MCF 10A (cell line): ENCODE measurements at regions of chr5 and their contacts with region 1.

Region 1: GRCh38 chr5:75265731-75266130 is 29.1 kb upstream of the ANKRD31 start:
- DNase-seq: peak; percentile 47
- H3K4me3 Mint-ChIP-seq: no peak overlapping the region
- H3K27ac Mint-ChIP-seq: no peak overlapping the region
- H3K4me1 Mint-ChIP-seq: no peaks in the 10 kb centered on the region
- H3K27me3 Mint-ChIP-seq: no peaks in the 10 kb centered on the region
- CTCF ChIP-seq: peak; percentile 63

Region 2: DNA sequence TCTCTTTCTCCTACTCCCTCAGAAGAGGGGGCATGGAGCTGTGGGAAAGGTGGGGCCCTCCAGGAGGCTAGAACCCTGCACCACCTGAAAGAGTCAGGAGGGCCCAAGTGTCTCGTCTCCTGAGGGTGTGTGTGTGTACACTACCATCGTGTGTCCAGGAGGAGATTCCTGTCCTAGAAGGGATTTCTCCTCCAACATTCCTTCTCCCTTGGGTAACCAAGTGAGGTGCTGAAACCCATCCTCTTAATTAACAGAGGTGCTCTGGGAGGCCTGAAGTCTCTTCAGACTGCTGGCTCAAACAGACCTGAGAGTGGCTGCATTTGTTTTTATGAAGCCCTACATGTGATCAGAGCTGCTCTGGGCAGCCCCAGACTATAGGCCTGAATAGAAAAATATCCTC is 338.4 kb before region 1 on chr5:
- CTCF ChIA-PET with region 1: interaction called, 40 read pairs
- POLR2A ChIA-PET with region 1: interaction called, 5 read pairs
- intact Hi-C with region 1: loop called (anchors 1 kb)
- DNase-seq: no peak
- H3K4me3 Mint-ChIP-seq: no peak overlapping the region
- H3K27ac Mint-ChIP-seq: no peak overlapping the region
- H3K4me1 Mint-ChIP-seq: no peaks in the 10 kb centered on the region
- H3K27me3 Mint-ChIP-seq: no peaks in the 10 kb centered on the region
- CTCF ChIP-seq: no peak

Region 3: GRCh38 chr5:75156585-75156984 is 109.1 kb before region 1 on chr5:
- CTCF ChIA-PET with region 1: no interaction called
- POLR2A ChIA-PET with region 1: no interaction called
- intact Hi-C with region 1: loop called (anchors 5 kb)
- DNase-seq: peak; percentile 21
- H3K4me3 Mint-ChIP-seq: no peak overlapping the region
- H3K27ac Mint-ChIP-seq: no peak overlapping the region
- H3K4me1 Mint-ChIP-seq: peaks cover 14% of the 10 kb centered on the region
- H3K27me3 Mint-ChIP-seq: no peaks in the 10 kb centered on the region
- CTCF ChIP-seq: no peak